ENCODE measurements at regions of chr20 and their contacts with region 1.

Region 1: GRCh38 chr20:32789896-32790750 is 27.9 kb downstream of the DNMT3B start:
- DNase-seq: peak; percentile 41
- H3K4me3 ChIP-seq: no peak overlapping the region
- H3K27ac ChIP-seq: no peak overlapping the region
- H3K27me3 ChIP-seq: no peaks in the 10 kb centered on the region
- CTCF ChIP-seq: peak; percentile 99

Region 2: DNA sequence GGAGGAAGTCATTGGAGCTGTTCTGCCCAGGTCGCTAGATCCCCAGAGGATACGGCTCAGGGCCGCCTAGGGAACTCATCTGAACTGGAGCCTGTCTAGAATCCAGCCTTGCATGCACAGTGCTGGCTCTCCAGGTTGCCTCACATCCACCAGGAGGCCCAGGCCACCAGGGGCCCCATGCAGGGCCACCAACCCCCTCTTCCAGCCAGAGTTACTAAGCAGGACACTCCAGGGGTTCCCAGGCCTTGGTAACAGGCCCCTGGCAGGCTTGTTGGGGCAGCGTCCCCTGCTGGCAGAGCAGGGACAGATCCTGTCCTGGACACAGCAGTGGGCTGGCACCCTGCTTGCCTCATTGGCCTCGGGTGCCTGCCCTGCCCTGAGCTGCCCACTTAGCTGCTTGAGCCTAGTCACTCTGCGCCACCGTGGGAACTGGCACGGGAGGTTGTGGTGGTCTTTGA is 103.9 kb after region 1 on chr20:
- CTCF ChIA-PET with region 1: interaction called, 31 read pairs
- POLR2A ChIA-PET with region 1: no interaction called
- DNase-seq: no peak
- H3K4me3 ChIP-seq: no peak overlapping the region
- H3K27ac ChIP-seq: no peak overlapping the region
- H3K27me3 ChIP-seq: peaks cover 8% of the 10 kb centered on the region
- CTCF ChIP-seq: peak; percentile 54

Region 3: DNA sequence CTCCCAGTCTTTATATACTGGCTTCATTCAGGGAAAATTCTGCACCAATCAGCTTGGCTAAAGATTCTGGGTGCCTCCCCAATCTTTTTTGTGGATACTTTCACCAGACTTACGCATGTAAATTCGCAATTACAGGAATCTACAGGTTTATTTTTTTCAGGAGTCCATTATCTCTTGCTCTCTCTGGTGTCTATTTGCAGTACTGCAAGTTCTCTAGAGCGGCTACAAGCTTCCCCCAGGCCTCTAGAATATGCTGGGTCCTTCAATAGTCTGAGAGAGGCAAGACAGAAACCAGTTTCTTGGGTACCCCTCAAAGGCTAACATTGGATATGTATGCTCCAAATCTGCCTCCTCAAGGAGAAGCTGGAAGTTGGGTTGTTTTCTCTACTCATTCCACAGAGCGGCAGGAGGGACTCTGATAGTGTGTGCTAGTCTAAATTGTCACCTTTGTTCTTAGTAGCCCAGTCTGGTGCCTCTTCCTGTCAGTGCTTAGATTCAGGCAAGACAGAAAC is 155.6 kb after region 1 on chr20:
- CTCF ChIA-PET with region 1: interaction called, 82 read pairs
- POLR2A ChIA-PET with region 1: no interaction called
- DNase-seq: peak; percentile 3
- H3K4me3 ChIP-seq: no peak overlapping the region
- H3K27ac ChIP-seq: no peak overlapping the region
- H3K27me3 ChIP-seq: peaks cover 14% of the 10 kb centered on the region
- CTCF ChIP-seq: peak; percentile 72